ENCODE measurements at regions of chr2 and their contacts with region 1.

Region 1: GRCh38 chr2:42238644-42239288 is 69.6 kb downstream of the EML4 start:
- DNase-seq: peak; percentile 76
- H3K4me3 ChIP-seq: no peak overlapping the region
- H3K27ac ChIP-seq: no peak overlapping the region
- H3K4me1 ChIP-seq: no peaks in the 10 kb centered on the region
- CTCF ChIP-seq: peak; percentile 85

Region 2: GRCh38 chr2:41709702-41710599 is 528.8 kb before region 1 on chr2:
- CTCF ChIA-PET with region 1: no interaction called
- POLR2A ChIA-PET with region 1: no interaction called
- intact Hi-C with region 1: no loop called
- DNase-seq: no peak
- H3K4me3 ChIP-seq: no peak overlapping the region
- H3K27ac ChIP-seq: no peak overlapping the region
- H3K4me1 ChIP-seq: no peaks in the 10 kb centered on the region
- CTCF ChIP-seq: no peak

Region 3: GRCh38 chr2:41869542-41870264 is 369.1 kb before region 1 on chr2:
- CTCF ChIA-PET with region 1: no interaction called
- POLR2A ChIA-PET with region 1: no interaction called
- intact Hi-C with region 1: loop called (anchors 5 kb)
- DNase-seq: peak; percentile 57
- H3K4me3 ChIP-seq: no peak overlapping the region
- H3K27ac ChIP-seq: no peak overlapping the region
- H3K4me1 ChIP-seq: no peaks in the 10 kb centered on the region
- CTCF ChIP-seq: peak; percentile 81

Region 4: DNA sequence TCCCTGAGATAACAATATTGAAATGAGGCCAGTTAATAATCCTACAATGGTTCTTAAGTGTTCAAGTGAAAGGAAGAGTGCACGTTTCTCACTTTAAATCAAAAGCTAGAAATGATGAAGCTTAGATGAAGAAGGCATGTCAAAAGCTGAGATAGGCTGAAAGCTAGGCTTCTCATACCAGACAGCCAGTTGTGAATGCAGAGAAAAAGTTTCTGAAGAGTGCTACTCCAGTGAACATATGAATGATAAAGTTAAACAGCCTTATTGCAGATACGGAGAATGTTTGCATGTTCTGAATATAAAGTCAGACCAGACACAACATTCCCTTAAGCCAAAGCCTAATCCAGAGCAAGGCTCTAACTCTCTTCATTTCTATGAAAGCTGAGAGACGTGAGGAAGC is 18.2 kb before region 1 on chr2:
- CTCF ChIA-PET with region 1: no interaction called
- POLR2A ChIA-PET with region 1: interaction called, 14 read pairs
- intact Hi-C with region 1: no loop called
- DNase-seq: no peak
- H3K4me3 ChIP-seq: no peak overlapping the region
- H3K27ac ChIP-seq: no peak overlapping the region
- H3K4me1 ChIP-seq: no peaks in the 10 kb centered on the region
- CTCF ChIP-seq: no peak